H1 (cell line): ENCODE measurements at regions of chr18 and their contacts with region 1.

Region 1: DNA sequence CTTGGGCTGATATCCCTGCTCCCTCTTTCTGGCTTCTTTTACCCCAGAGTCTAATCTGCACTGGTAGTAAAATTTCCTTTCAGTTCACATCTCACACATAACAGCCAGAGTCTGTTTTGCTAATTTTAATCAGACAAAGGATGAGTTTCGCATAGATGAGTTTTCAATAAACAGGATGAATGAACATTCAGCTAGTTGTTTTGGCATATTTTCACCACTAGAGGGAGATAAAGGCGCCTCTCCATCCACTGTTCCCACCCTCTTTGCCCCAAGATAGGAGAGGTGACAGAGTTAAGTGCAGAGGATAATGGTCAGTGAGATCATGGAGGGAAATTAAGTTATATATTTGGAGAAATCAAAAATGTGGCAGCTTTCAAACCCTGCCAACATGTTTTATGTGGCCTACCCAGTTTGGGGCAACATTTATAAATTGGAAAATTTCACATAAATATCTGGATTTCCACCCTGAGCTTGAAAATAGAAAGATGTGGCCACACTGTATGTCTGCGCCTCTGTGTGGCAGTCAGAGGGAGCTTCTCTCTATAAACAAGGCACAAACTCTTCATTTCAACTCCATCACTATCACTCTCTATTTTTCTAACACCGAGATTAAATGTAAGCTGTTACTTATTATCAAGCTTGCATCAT is 48.5 kb upstream of the DTNA start:
- DNase-seq: no peak
- H3K4me3 ChIP-seq: peak overlapping the region in 1 of 4 experiments; percentile 44; a peak in 1 of 8 replicates
- H3K27ac ChIP-seq: peak overlapping the region; percentile 82
- H3K4me1 ChIP-seq: peaks cover 8 to 23% (median 18%) of the 10 kb centered on the region in 4 experiments; a peak in 6 of 7 replicates
- H3K27me3 ChIP-seq: no peaks in the 10 kb centered on the region
- CTCF ChIP-seq: peak in 2 of 3 experiments; percentile 61 to 83; a peak in 3 of 4 replicates
- EP300 ChIP-seq: no peak
- POLR2A ChIP-seq: no peak
- RAD21 ChIP-seq: peak; percentile 64 to 74

Region 2: GRCh38 chr18:34592961-34593382 is 68.6 kb before region 1 on chr18:
- CTCF ChIA-PET with region 1: interaction called, 31 read pairs
- POLR2A ChIA-PET with region 1: interaction called, 6 read pairs
- DNase-seq: peak in 1 of 2 experiments; percentile 48
- H3K4me3 ChIP-seq: peak overlapping the region; percentile 10 to 52 (median 36); a peak in 5 of 8 replicates
- H3K27ac ChIP-seq: peak overlapping the region; percentile 28; the same call in 1 of the 2 replicates
- H3K4me1 ChIP-seq: peaks cover 2 to 12% (median 3%) of the 10 kb centered on the region in 4 experiments; a peak in 6 of 7 replicates
- H3K27me3 ChIP-seq: no peaks in the 10 kb centered on the region
- CTCF ChIP-seq: no peak
- EP300 ChIP-seq: no peak
- POLR2A ChIP-seq: no peak
- RAD21 ChIP-seq: 0 out of 4 replicates have a peak, but pooled peaks of 1 of the 2 experiments have one; percentile 2

Region 3: GRCh38 chr18:34676816-34677574 is 15.4 kb after region 1 on chr18:
- CTCF ChIA-PET with region 1: interaction called, 55 read pairs
- POLR2A ChIA-PET with region 1: interaction called, 4 read pairs
- DNase-seq: no peak
- H3K4me3 ChIP-seq: no peak overlapping the region
- H3K27ac ChIP-seq: no peak overlapping the region
- H3K4me1 ChIP-seq: no peaks in the 10 kb centered on the region
- H3K27me3 ChIP-seq: no peaks in the 10 kb centered on the region
- CTCF ChIP-seq: no peak
- EP300 ChIP-seq: no peak
- POLR2A ChIP-seq: no peak
- RAD21 ChIP-seq: no peak

Region 4: DNA sequence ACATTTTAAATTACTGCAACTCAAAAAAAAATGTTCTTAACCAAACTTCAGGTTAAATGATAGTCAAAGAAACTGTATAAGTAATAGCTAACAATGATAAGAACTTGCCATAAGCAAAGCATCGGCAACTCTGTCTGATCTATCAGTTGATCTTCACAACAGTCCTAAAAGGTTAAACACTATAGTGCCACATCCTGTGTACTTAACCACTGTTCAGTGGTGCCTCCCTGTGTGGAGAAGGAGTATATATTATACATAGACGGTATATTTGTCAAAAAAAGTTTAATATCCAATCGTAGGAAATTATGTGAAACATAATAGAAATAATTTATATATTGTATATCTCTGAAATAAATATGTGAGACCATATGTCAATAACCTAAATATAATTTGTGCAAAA is 61.6 kb after region 1 on chr18:
- CTCF ChIA-PET with region 1: interaction called, 27 read pairs
- POLR2A ChIA-PET with region 1: interaction called, 3 read pairs
- DNase-seq: no peak
- H3K4me3 ChIP-seq: no peak overlapping the region
- H3K27ac ChIP-seq: no peak overlapping the region
- H3K4me1 ChIP-seq: no peaks in the 10 kb centered on the region
- H3K27me3 ChIP-seq: no peaks in the 10 kb centered on the region
- CTCF ChIP-seq: no peak
- EP300 ChIP-seq: no peak
- POLR2A ChIP-seq: no peak
- RAD21 ChIP-seq: no peak

Region 5: DNA sequence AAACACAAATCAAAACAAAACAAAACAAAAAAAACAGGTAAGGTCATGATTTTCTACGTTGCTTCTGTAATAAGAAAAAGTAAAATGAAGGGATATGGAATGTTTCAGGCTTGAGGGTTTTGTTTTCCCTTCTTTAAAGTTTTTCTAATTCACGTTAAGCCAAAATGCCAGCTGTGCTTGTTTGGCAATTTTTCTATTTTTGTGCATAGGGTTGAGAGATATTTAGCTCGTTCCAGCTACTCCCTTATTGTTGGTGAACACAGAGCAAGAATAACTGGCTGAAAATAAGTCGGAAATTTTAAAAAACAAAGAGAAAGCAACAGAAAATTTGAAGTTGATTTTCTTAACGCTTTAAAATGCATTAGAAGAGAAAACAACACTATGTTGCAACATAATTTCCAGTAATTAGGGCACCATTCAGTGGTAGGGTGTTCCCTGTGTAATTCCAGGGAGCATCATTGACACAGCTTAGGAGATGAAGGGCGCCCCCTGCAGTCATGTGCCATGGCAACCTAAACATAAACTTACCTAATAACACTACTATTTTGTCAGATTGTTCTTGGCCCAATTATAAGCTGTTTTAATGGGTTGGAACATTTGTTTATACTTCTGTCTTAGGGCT is 148.0 kb after region 1 on chr18:
- CTCF ChIA-PET with region 1: interaction called, 14 read pairs
- POLR2A ChIA-PET with region 1: no interaction called
- DNase-seq: peak in 1 of 2 experiments; percentile 82
- H3K4me3 ChIP-seq: no peak overlapping the region
- H3K27ac ChIP-seq: no peak overlapping the region
- H3K4me1 ChIP-seq: peaks cover 0 to 7% (median 2%) of the 10 kb centered on the region in 4 experiments; a peak in 1 of 7 replicates
- H3K27me3 ChIP-seq: no peaks in the 10 kb centered on the region
- CTCF ChIP-seq: peak; percentile 53 to 81 (median 55)
- EP300 ChIP-seq: no peak
- POLR2A ChIP-seq: no peak
- RAD21 ChIP-seq: peak; percentile 57 to 70

Region 6: GRCh38 chr18:34947711-34948125 is 286.1 kb after region 1 on chr18:
- CTCF ChIA-PET with region 1: no interaction called
- POLR2A ChIA-PET with region 1: no interaction called
- DNase-seq: no peak
- H3K4me3 ChIP-seq: no peak overlapping the region
- H3K27ac ChIP-seq: no peak overlapping the region
- H3K4me1 ChIP-seq: no peaks in the 10 kb centered on the region
- H3K27me3 ChIP-seq: no peaks in the 10 kb centered on the region
- CTCF ChIP-seq: no peak
- EP300 ChIP-seq: no peak
- POLR2A ChIP-seq: no peak
- RAD21 ChIP-seq: no peak